Activated B cell treated with CpG ODN at 0.5 μM for 24 hours (primary cell): ENCODE measurements at regions of chr3 and their contacts with region 1.

Region 1: DNA sequence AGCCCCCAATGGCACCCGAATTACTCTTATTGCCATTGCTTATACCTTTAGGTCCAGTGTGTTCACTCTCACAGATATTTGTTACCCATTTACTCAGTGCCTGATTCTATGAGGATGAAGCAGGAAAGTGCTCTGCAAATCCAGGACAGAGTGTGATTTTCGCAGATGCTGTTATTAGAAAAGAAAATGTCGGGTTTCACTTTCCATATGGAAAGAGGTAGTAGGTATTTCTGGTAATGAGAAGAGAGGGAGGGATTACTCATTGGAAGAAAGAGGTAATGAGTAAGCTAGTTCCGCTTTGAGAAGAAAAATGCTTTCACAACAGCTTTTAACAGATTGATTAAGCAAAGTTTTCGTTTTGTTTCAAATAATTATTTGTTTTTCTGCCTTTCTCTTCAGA is 336.3 kb upstream of the CFAP20DC start:
- DNase-seq: no peak
- ATAC-seq: peak; percentile 76
- H3K4me3 Mint-ChIP-seq: peak overlapping the region; percentile 50
- H3K27ac Mint-ChIP-seq: peak overlapping the region; percentile 88
- H3K4me1 Mint-ChIP-seq: peaks cover 27% of the 10 kb centered on the region
- H3K27me3 Mint-ChIP-seq: no peaks in the 10 kb centered on the region
- CTCF ChIP-seq: no peak

Region 2: GRCh38 chr3:59245859-59246501 is 140.2 kb before region 1 on chr3:
- CTCF ChIA-PET with region 1: no interaction called
- POLR2A ChIA-PET with region 1: no interaction called
- intact Hi-C with region 1: loop called (anchors 2 kb)
- DNase-seq: no peak
- ATAC-seq: no peak
- H3K4me3 Mint-ChIP-seq: no peak overlapping the region
- H3K27ac Mint-ChIP-seq: no peak overlapping the region
- H3K4me1 Mint-ChIP-seq: peaks cover 22% of the 10 kb centered on the region
- H3K27me3 Mint-ChIP-seq: no peaks in the 10 kb centered on the region
- CTCF ChIP-seq: no peak

Region 3: GRCh38 chr3:59262076-59262498 is 124.1 kb before region 1 on chr3:
- CTCF ChIA-PET with region 1: no interaction called
- POLR2A ChIA-PET with region 1: no interaction called
- intact Hi-C with region 1: loop called (anchors 5 kb)
- DNase-seq: no peak
- ATAC-seq: peak; percentile 92
- H3K4me3 Mint-ChIP-seq: peak overlapping the region; percentile 70
- H3K27ac Mint-ChIP-seq: peak overlapping the region; percentile 76
- H3K4me1 Mint-ChIP-seq: peaks cover 24% of the 10 kb centered on the region
- H3K27me3 Mint-ChIP-seq: no peaks in the 10 kb centered on the region
- CTCF ChIP-seq: no peak

Region 4: GRCh38 chr3:59374818-59375211 is 11.3 kb before region 1 on chr3:
- CTCF ChIA-PET with region 1: no interaction called
- POLR2A ChIA-PET with region 1: interaction called, 3 read pairs
- intact Hi-C with region 1: loop called (anchors 1 kb)
- DNase-seq: no peak
- ATAC-seq: peak; percentile 95
- H3K4me3 Mint-ChIP-seq: peak overlapping the region; percentile 29
- H3K27ac Mint-ChIP-seq: peak overlapping the region; percentile 56
- H3K4me1 Mint-ChIP-seq: peaks cover 32% of the 10 kb centered on the region
- H3K27me3 Mint-ChIP-seq: no peaks in the 10 kb centered on the region
- CTCF ChIP-seq: no peak

Region 5: GRCh38 chr3:59450946-59451763 is 65.0 kb after region 1 on chr3:
- CTCF ChIA-PET with region 1: no interaction called
- POLR2A ChIA-PET with region 1: interaction called, 3 read pairs
- intact Hi-C with region 1: loop called (anchors 2 kb)
- DNase-seq: no peak
- ATAC-seq: peak; percentile 92
- H3K4me3 Mint-ChIP-seq: peak overlapping the region; percentile 69
- H3K27ac Mint-ChIP-seq: peak overlapping the region; percentile 88
- H3K4me1 Mint-ChIP-seq: peaks cover 41% of the 10 kb centered on the region
- H3K27me3 Mint-ChIP-seq: no peaks in the 10 kb centered on the region
- CTCF ChIP-seq: no peak

Region 6: GRCh38 chr3:59559721-59560435 is 173.7 kb after region 1 on chr3:
- CTCF ChIA-PET with region 1: no interaction called
- POLR2A ChIA-PET with region 1: no interaction called
- intact Hi-C with region 1: no loop called
- DNase-seq: no peak
- ATAC-seq: peak; percentile 34
- H3K4me3 Mint-ChIP-seq: no peak overlapping the region
- H3K27ac Mint-ChIP-seq: no peak overlapping the region
- H3K4me1 Mint-ChIP-seq: no peaks in the 10 kb centered on the region
- H3K27me3 Mint-ChIP-seq: no peaks in the 10 kb centered on the region
- CTCF ChIP-seq: no peak

Region 7: GRCh38 chr3:59839810-59840515 is 453.8 kb after region 1 on chr3:
- CTCF ChIA-PET with region 1: no interaction called
- POLR2A ChIA-PET with region 1: no interaction called
- intact Hi-C with region 1: loop called (anchors 5 kb)
- DNase-seq: no peak
- ATAC-seq: peak; percentile 90
- H3K4me3 Mint-ChIP-seq: peak overlapping the region; percentile 76
- H3K27ac Mint-ChIP-seq: peak overlapping the region; percentile 95
- H3K4me1 Mint-ChIP-seq: peaks cover 48% of the 10 kb centered on the region
- H3K27me3 Mint-ChIP-seq: no peaks in the 10 kb centered on the region
- CTCF ChIP-seq: no peak